ENCODE measurements at regions of chr12 and their contacts with region 1.

Region 1: DNA sequence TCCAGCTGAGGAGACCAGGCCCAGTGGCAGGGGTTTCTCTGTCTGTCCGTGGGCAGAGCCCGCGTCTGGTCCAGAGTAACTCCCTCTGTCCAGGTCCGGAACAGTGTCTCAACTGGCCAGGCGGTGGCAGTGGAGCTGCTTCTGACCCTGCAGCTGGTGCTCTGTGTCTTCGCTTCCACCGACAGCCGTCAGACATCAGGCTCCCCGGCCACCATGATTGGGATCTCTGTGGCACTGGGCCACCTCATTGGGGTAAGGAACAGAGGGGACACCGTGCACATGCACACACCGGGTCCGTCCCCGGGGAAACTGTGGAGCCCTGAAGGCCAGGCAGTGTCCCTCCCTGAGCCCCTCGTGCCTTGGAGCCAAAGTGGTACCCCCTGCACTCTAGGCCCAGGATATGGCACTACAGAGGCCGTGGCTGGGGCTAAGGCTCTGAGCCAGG is 1.5 kb downstream of the AQP6 start:
- DNase-seq: no peak
- CTCF ChIP-seq: no peak

Region 2: GRCh38 chr12:49031553-49032162 is 942.6 kb before region 1 on chr12:
- in situ Hi-C with region 1: no loop called
- DNase-seq: no peak
- CTCF ChIP-seq: no peak

Region 3: GRCh38 chr12:50055831-50056638 is 81.8 kb after region 1 on chr12:
- in situ Hi-C with region 1: loop called (anchors 10 kb)
- DNase-seq: peak; percentile 86
- CTCF ChIP-seq: peak; percentile 97